Activated naive CD4-positive, alpha-beta T cell treated with anti-CD3 and anti-CD28 coated beads for 36 hours (primary cell): ENCODE measurements at regions of chr2 and their contacts with region 1.

Region 1: GRCh38 chr2:153478334-153479261 is at the start of gene RPRM:
- DNase-seq: peak; percentile 55
- H3K4me3 Mint-ChIP-seq: peak within 1 kb of the TSS; percentile 52
- H3K27ac Mint-ChIP-seq: no peak within 1 kb of the TSS
- H3K4me1 Mint-ChIP-seq: peaks cover 15% of the 10 kb centered on the region
- H3K27me3 Mint-ChIP-seq: peaks cover 56% of the 10 kb centered on the region
- total RNA-seq, gene RPRM: not detected

Region 2: GRCh38 chr2:152925547-152926327 is 552.9 kb before region 1 on chr2:
- CTCF ChIA-PET with region 1: no interaction called
- intact Hi-C with region 1: loop called (anchors 1 kb)
- DNase-seq: peak; percentile 67
- H3K4me3 Mint-ChIP-seq: no peak overlapping the region
- H3K27ac Mint-ChIP-seq: no peak overlapping the region
- H3K4me1 Mint-ChIP-seq: no peaks in the 10 kb centered on the region
- H3K27me3 Mint-ChIP-seq: peaks cover 9% of the 10 kb centered on the region

Region 3: GRCh38 chr2:154015235-154015634 is 536.6 kb after region 1 on chr2:
- CTCF ChIA-PET with region 1: no interaction called
- intact Hi-C with region 1: no loop called
- DNase-seq: no peak
- H3K4me3 Mint-ChIP-seq: no peak overlapping the region
- H3K27ac Mint-ChIP-seq: no peak overlapping the region
- H3K4me1 Mint-ChIP-seq: no peaks in the 10 kb centered on the region
- H3K27me3 Mint-ChIP-seq: no peaks in the 10 kb centered on the region